CD4-positive, alpha-beta memory T cell (primary cell): ENCODE measurements at regions of chr6 and their contacts with region 1.

Region 1: GRCh38 chr6:119333707-119334295 is 15.8 kb downstream of the MAN1A1 start:
- DNase-seq: peak in 4 of 5 donors; percentile 29 to 44 (median 37)
- H3K4me3 ChIP-seq: no peak overlapping the region
- H3K4me3 Mint-ChIP-seq: no peak overlapping the region
- H3K27ac ChIP-seq: no peak overlapping the region
- H3K27ac Mint-ChIP-seq: no peak overlapping the region
- H3K4me1 ChIP-seq: peaks cover 5% of the 10 kb centered on the region
- H3K4me1 Mint-ChIP-seq: peaks cover 6 to 31% (median 26%) of the 10 kb centered on the region in 4 donors
- H3K27me3 ChIP-seq: no peaks in the 10 kb centered on the region
- H3K27me3 Mint-ChIP-seq: no peaks in the 10 kb centered on the region

Region 2: DNA sequence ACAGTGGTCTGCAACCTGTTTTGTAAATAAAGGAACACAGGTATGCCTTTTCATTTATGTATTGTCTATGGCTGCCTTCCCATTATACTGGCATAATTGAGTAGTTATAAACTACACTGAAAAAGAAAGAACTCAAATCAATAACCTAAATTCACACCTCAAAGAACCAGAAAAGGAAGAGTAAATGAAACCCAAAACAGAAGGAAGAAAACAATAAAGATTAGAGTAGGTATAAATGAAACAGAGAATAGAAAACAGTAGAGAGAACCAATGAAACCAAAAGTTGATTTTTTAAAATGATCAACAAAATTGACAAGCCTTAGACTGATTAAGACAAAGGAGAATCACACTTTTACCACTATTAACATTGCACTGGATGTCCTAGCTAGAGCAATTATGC is 290.0 kb before region 1 on chr6:
- CTCF ChIA-PET with region 1: no interaction called
- POLR2A ChIA-PET with region 1: no interaction called
- intact Hi-C with region 1: no loop called
- DNase-seq: no peak
- H3K4me3 ChIP-seq: no peak overlapping the region
- H3K4me3 Mint-ChIP-seq: no peak overlapping the region
- H3K27ac ChIP-seq: no peak overlapping the region
- H3K27ac Mint-ChIP-seq: no peak overlapping the region
- H3K4me1 ChIP-seq: no peaks in the 10 kb centered on the region
- H3K4me1 Mint-ChIP-seq: peaks cover 0 to 3% (median 0%) of the 10 kb centered on the region in 4 donors
- H3K27me3 ChIP-seq: no peaks in the 10 kb centered on the region
- H3K27me3 Mint-ChIP-seq: no peaks in the 10 kb centered on the region

Region 3: GRCh38 chr6:119294984-119295383 is 38.8 kb before region 1 on chr6:
- CTCF ChIA-PET with region 1: no interaction called
- POLR2A ChIA-PET with region 1: no interaction called
- intact Hi-C with region 1: no loop called
- DNase-seq: no peak
- H3K4me3 ChIP-seq: no peak overlapping the region
- H3K4me3 Mint-ChIP-seq: no peak overlapping the region
- H3K27ac ChIP-seq: no peak overlapping the region
- H3K27ac Mint-ChIP-seq: peak overlapping the region in 1 of 7 donors; percentile 1
- H3K4me1 ChIP-seq: no peaks in the 10 kb centered on the region
- H3K4me1 Mint-ChIP-seq: peaks cover 4 to 7% (median 4%) of the 10 kb centered on the region in 4 donors
- H3K27me3 ChIP-seq: no peaks in the 10 kb centered on the region
- H3K27me3 Mint-ChIP-seq: no peaks in the 10 kb centered on the region

Region 4: DNA sequence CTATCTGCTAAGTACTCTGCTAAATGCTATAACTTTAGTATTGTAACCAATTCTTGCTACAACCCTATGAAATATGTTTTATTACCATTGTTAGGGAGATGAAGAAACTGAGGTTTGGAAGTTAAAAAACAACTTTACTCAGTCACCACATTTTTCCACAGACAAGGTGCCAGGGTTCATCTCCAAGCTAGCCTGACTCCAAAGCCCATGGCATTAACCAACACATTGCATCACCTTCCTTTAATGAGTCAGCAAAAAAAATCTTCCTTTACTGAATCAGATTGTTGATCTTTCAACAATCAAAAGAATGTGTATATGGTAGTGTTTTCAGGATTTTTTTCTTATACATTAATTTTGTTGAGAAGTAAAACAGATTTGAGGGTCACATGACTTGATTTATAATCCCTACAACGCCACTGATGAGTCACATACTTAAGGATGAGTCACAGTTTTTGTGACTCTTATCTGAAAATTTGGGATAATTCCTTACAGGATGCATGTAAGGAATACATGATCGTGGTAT is 25.7 kb before region 1 on chr6:
- CTCF ChIA-PET with region 1: interaction called, 11 read pairs
- POLR2A ChIA-PET with region 1: no interaction called
- intact Hi-C with region 1: no loop called
- DNase-seq: no peak
- H3K4me3 ChIP-seq: no peak overlapping the region
- H3K4me3 Mint-ChIP-seq: no peak overlapping the region
- H3K27ac ChIP-seq: no peak overlapping the region
- H3K27ac Mint-ChIP-seq: no peak overlapping the region
- H3K4me1 ChIP-seq: peaks cover 22% of the 10 kb centered on the region
- H3K4me1 Mint-ChIP-seq: peaks cover 15 to 41% (median 20%) of the 10 kb centered on the region in 4 donors
- H3K27me3 ChIP-seq: no peaks in the 10 kb centered on the region
- H3K27me3 Mint-ChIP-seq: no peaks in the 10 kb centered on the region

Region 5: GRCh38 chr6:119742188-119742803 is 408.5 kb after region 1 on chr6:
- CTCF ChIA-PET with region 1: no interaction called
- POLR2A ChIA-PET with region 1: no interaction called
- intact Hi-C with region 1: loop called (anchors 2 kb)
- DNase-seq: peak; percentile 11 to 38 (median 30)
- H3K4me3 ChIP-seq: no peak overlapping the region
- H3K4me3 Mint-ChIP-seq: peak overlapping the region in 2 of 8 donors; percentile 18 to 19
- H3K27ac ChIP-seq: no peak overlapping the region
- H3K27ac Mint-ChIP-seq: no peak overlapping the region
- H3K4me1 ChIP-seq: no peaks in the 10 kb centered on the region
- H3K4me1 Mint-ChIP-seq: peaks cover 0 to 7% (median 3%) of the 10 kb centered on the region in 4 donors
- H3K27me3 ChIP-seq: no peaks in the 10 kb centered on the region
- H3K27me3 Mint-ChIP-seq: no peaks in the 10 kb centered on the region

Region 6: GRCh38 chr6:120496661-120497060 is 1162.9 kb after region 1 on chr6:
- CTCF ChIA-PET with region 1: no interaction called
- POLR2A ChIA-PET with region 1: no interaction called
- intact Hi-C with region 1: loop called (anchors 5 kb)
- DNase-seq: no peak
- H3K4me3 ChIP-seq: no peak overlapping the region
- H3K4me3 Mint-ChIP-seq: no peak overlapping the region
- H3K27ac ChIP-seq: no peak overlapping the region
- H3K27ac Mint-ChIP-seq: no peak overlapping the region
- H3K4me1 ChIP-seq: no peaks in the 10 kb centered on the region
- H3K4me1 Mint-ChIP-seq: no peaks in the 10 kb centered on the region
- H3K27me3 ChIP-seq: no peaks in the 10 kb centered on the region
- H3K27me3 Mint-ChIP-seq: no peaks in the 10 kb centered on the region

Region 7: DNA sequence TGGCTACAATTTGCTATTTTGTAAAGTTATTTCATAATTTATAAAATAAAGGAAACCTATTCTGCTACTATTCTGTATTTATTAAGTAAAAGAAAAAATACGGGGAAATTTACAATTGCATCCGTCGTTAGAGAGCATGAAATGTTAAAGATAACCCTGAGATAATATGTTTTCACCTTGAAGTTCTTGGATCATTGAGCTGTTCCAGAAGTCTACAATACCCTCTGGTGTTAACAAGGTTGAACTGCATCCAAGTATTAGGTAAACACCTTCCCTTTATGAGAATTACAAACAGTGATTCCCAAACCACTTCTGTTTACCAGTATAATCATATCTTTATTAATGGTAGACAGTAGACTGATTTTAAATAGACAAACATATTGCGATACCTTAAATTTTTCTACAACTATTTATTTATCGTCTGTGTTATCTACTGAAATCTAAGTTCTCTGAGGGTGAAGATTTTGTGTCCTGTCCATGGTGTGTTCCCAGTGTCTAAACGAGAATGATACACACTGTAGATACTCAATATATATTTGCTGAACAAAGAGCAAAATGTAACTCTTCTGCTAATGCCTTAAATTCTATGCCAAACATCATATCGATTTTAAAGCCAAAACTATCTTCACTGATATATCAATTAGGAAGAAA is 1972.3 kb after region 1 on chr6:
- CTCF ChIA-PET with region 1: no interaction called
- POLR2A ChIA-PET with region 1: no interaction called
- intact Hi-C with region 1: loop called (anchors 5 kb)
- DNase-seq: peak in 4 of 5 donors; percentile 3 to 14 (median 9)
- H3K4me3 ChIP-seq: no peak overlapping the region
- H3K4me3 Mint-ChIP-seq: no peak overlapping the region
- H3K27ac ChIP-seq: no peak overlapping the region
- H3K27ac Mint-ChIP-seq: no peak overlapping the region
- H3K4me1 ChIP-seq: no peaks in the 10 kb centered on the region
- H3K4me1 Mint-ChIP-seq: peaks cover 0 to 1% (median 0%) of the 10 kb centered on the region in 4 donors
- H3K27me3 ChIP-seq: no peaks in the 10 kb centered on the region
- H3K27me3 Mint-ChIP-seq: no peaks in the 10 kb centered on the region